ENCODE measurements at regions of chr22 and their contacts with region 1.

Region 1: DNA sequence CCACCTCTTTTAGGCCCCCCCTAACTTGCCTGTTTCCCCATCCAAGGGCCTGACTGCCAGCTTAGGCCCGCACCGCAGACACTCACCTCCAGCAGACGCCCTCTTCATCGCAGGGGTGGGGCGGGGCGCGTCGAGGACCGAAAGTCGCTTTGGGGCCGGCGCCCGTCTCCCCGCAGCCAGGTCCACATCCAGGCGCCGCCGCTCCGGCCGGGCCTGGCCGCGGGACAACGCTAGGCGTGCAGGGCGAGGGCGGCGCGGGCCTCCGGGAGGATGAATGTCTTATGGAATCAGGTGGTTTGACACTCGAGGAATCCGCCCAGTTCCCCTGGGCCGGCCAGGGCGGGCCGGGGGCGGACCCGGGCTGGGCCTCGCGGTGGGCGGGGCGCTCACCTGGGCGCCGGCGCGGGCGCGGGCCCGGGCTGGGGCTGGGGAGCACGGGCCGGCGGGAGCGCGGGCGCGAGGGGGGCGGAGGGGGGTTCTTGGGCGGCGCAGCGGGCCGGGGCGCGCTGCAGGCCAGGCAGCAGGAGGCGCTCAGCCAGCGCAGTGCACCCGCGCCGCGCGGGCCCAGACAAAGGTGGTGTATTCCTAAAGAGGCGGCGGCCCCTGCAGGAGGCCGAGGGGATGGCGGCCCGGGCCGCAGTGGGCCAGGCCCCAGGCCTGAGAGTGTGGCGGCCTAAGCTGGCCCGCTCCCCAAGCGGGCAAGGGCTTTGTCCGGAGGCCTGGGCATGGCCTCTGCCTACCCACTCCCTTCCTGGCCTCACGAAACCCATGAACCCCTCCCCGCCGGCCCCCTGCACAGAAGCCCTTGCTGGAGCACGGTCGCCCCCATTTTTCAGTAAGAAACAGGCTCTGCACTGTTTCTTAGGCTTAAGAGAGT is 177.6 kb downstream of the IGLL1 start:
- DNase-seq: peak; percentile 80
- H3K4me3 ChIP-seq: peak overlapping the region in 3 of 4 donors; percentile 23 to 51 (median 33)
- H3K27ac ChIP-seq: peak overlapping the region; percentile 19 to 52 (median 42)
- H3K4me1 ChIP-seq: peaks cover 0 to 14% (median 10%) of the 10 kb centered on the region in 4 donors
- H3K27me3 ChIP-seq: peaks cover 13% of the 10 kb centered on the region
- CTCF ChIP-seq: peak; percentile 48 to 70 (median 64)
- EP300 ChIP-seq: no peak
- POLR2A ChIP-seq: no peak

Region 2: GRCh38 chr22:23450434-23450795 is 47.9 kb after region 1 on chr22:
- in situ Hi-C with region 1: no loop called
- intact Hi-C with region 1: no loop called
- DNase-seq: no peak
- H3K4me3 ChIP-seq: no peak overlapping the region
- H3K27ac ChIP-seq: no peak overlapping the region
- H3K4me1 ChIP-seq: no peaks in the 10 kb centered on the region
- H3K27me3 ChIP-seq: no peaks in the 10 kb centered on the region
- CTCF ChIP-seq: no peak
- EP300 ChIP-seq: no peak
- POLR2A ChIP-seq: no peak

Region 3: DNA sequence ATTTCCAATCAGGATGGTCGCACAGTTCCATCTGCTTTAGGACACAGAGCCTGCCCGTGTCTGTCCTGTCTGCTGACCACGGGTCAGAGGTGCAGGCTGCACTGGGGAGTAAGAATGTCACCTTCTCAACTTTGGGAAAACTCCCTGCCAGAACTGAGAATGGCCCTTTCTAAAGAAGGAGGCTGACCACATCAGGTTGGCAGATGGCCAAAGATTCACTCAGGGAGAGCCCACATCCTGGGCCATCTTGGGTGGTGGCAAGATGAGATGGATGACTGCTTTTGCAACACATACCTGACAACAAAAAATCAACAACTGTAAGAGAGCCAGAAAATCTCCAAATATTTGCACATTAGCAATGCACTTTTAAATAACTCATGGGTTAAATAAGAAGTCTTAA is 75.7 kb after region 1 on chr22:
- in situ Hi-C with region 1: no loop called
- intact Hi-C with region 1: no loop called
- DNase-seq: no peak
- H3K4me3 ChIP-seq: no peak overlapping the region
- H3K27ac ChIP-seq: no peak overlapping the region
- H3K4me1 ChIP-seq: no peaks in the 10 kb centered on the region
- H3K27me3 ChIP-seq: no peaks in the 10 kb centered on the region
- CTCF ChIP-seq: no peak
- EP300 ChIP-seq: no peak
- POLR2A ChIP-seq: no peak

Region 4: GRCh38 chr22:23521441-23522113 is 119.1 kb after region 1 on chr22:
- in situ Hi-C with region 1: no loop called
- intact Hi-C with region 1: no loop called
- DNase-seq: peak; percentile 92
- H3K4me3 ChIP-seq: peak overlapping the region; percentile 34 to 61 (median 42)
- H3K27ac ChIP-seq: peak overlapping the region; percentile 82 to 94 (median 90)
- H3K4me1 ChIP-seq: peaks cover 13 to 43% (median 29%) of the 10 kb centered on the region in 4 donors
- H3K27me3 ChIP-seq: no peaks in the 10 kb centered on the region
- CTCF ChIP-seq: peak in 1 of 5 experiments; percentile 18
- EP300 ChIP-seq: no peak
- POLR2A ChIP-seq: no peak

Region 5: DNA sequence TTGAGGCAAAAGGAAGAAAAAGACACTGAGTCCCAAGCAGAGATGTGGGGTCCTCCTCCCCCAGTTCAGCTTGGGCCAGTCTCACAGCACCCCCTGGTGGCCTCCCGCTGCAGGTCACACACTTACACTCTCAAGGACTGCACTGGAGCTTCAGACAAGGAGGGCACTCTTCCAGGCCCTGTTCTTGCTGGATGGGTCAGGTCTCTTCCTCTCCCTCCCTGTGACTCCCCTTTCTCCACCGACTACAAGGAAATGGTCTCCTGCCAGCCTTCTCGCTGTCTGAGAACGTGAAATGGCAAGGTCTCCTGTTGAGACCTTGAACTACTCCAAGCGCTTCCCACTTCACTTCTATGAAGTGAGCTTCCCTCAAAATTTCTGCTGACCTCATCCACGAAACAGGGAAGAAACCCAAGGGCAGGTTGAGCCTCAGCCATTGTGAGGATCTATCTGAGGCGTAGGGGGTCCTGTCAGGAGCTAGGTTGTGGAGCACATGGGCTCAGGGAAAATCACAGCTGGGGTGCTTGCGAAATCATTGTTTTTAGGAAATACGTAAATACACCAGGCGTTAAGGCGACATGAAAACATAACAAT is 188.8 kb after region 1 on chr22:
- in situ Hi-C with region 1: loop called in 1 of 4 experiments (anchors 25 kb)
- intact Hi-C with region 1: no loop called
- DNase-seq: peak; percentile 50
- H3K4me3 ChIP-seq: no peak overlapping the region
- H3K27ac ChIP-seq: no peak overlapping the region
- H3K4me1 ChIP-seq: no peaks in the 10 kb centered on the region
- H3K27me3 ChIP-seq: no peaks in the 10 kb centered on the region
- CTCF ChIP-seq: peak; percentile 62 to 79 (median 75)
- EP300 ChIP-seq: no peak
- POLR2A ChIP-seq: no peak

Measured in transverse colon (tissue), 4 donors.